ENCODE measurements at regions of chr4 and their contacts with region 1.

Region 1: DNA sequence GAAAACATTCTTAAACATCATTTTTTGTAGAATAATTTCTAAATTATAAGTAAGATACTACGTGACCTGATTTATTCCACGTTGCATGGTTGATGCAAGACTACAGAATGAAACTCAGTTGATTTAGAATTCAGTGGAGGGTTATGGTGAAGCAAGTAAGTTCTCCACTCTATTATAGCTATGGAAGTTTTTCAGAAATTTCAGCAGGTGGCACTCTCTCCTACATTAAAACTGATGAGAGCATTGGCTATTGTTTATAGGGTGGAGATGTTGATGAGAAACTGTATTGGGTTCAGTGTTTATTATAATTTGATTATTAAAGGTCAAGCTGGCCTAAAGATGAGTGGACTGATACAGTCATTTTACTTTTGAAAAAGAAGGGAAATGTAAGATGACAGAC is 88.0 kb downstream of the FNIP2 start:
- DNase-seq: peak in 2 of 5 donors; percentile 37 to 40
- H3K4me3 ChIP-seq: no peak overlapping the region
- H3K27ac ChIP-seq: no peak overlapping the region
- H3K4me1 ChIP-seq: no peaks in the 10 kb centered on the region
- H3K27me3 ChIP-seq: no peaks in the 10 kb centered on the region
- CTCF ChIP-seq: peak; percentile 35

Region 2: GRCh38 chr4:159175085-159175988 is 318.5 kb after region 1 on chr4:
- intact Hi-C with region 1: loop called (anchors 10 kb)
- DNase-seq: peak in 4 of 5 donors; percentile 61 to 91 (median 84)
- H3K4me3 ChIP-seq: peak overlapping the region; percentile 5 to 34 (median 24)
- H3K27ac ChIP-seq: no peak overlapping the region
- H3K4me1 ChIP-seq: peaks cover 0 to 16% (median 11%) of the 10 kb centered on the region in 3 donors
- H3K27me3 ChIP-seq: no peaks in the 10 kb centered on the region
- CTCF ChIP-seq: peak; percentile 85